ENCODE measurements at regions of chr19 and their contacts with region 1.

Region 1: GRCh38 chr19:11035441-11036377 is 53.6 kb upstream of the LDLR start:
- DNase-seq: peak; percentile 78 to 92
- ATAC-seq: peak; percentile 85 to 92
- H3K4me3 ChIP-seq: no peak overlapping the region
- H3K27ac ChIP-seq: peak overlapping the region; percentile 64 to 73 (median 72)
- H3K4me1 ChIP-seq: peaks cover 11 to 15% of the 10 kb centered on the region in 2 donors
- H3K27me3 ChIP-seq: no peaks in the 10 kb centered on the region
- CTCF ChIP-seq: peak; percentile 63 to 83 (median 82)
- POLR2A ChIP-seq: no peak

Region 2: DNA sequence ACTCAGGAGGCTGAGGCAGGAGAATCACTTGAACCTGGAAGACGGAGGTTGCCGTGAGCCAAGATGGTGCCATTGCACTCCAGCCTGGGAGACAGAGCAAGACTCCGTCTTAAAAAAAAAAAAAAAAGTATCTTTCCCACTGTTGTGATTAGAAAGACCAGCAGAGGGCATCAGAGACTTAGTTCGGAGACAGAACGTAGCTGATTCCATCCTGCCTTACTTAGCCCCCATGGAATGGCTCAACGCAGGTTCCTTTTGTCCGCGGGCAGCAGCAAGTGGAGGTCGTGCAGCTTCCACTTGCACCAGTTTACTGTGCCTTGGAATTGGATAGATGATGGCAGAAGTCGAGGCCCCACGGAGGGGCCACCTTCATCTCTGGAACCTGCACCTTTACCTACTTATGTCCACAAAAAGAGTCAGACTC is 99.0 kb before region 1 on chr19:
- in situ Hi-C with region 1: no loop called
- intact Hi-C with region 1: loop called (anchors 1 kb)
- DNase-seq: no peak
- ATAC-seq: peak; percentile 88 to 92
- H3K4me3 ChIP-seq: no peak overlapping the region
- H3K27ac ChIP-seq: no peak overlapping the region
- H3K4me1 ChIP-seq: peaks cover 0 to 6% of the 10 kb centered on the region in 2 donors
- H3K27me3 ChIP-seq: no peaks in the 10 kb centered on the region
- CTCF ChIP-seq: peak; percentile 42 to 65 (median 60)
- POLR2A ChIP-seq: no peak

Region 3: DNA sequence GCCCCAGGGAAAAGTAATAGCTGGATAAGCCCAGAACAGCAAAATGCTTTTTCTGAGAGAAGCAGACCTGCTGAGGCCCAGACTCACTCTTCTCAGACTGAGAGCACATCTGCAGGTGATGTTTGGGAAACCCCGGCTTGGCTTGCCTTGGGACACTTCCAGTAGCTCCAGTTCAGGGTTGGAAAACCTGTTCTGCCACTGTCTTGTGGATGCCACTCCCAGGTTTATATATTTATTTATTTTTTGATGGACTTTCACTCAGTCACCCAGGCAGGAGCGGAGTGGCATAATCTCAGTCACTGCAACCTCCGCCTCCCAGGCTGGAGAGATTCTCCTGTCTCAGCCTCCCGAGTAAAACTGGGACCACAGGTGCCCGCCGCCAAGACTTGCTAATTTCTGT is 82.9 kb before region 1 on chr19:
- in situ Hi-C with region 1: no loop called
- intact Hi-C with region 1: no loop called
- DNase-seq: no peak
- ATAC-seq: no peak
- H3K4me3 ChIP-seq: no peak overlapping the region
- H3K27ac ChIP-seq: no peak overlapping the region
- H3K4me1 ChIP-seq: no peaks in the 10 kb centered on the region
- H3K27me3 ChIP-seq: no peaks in the 10 kb centered on the region
- CTCF ChIP-seq: no peak
- POLR2A ChIP-seq: no peak

Region 4: GRCh38 chr19:11090054-11090900 is 54.6 kb after region 1 on chr19:
- in situ Hi-C with region 1: no loop called
- intact Hi-C with region 1: loop called (anchors 5 kb)
- DNase-seq: peak; percentile 92 to 93
- ATAC-seq: peak; percentile 74 to 80
- H3K4me3 ChIP-seq: peak overlapping the region; percentile 45 to 64 (median 56)
- H3K27ac ChIP-seq: peak overlapping the region; percentile 81 to 85 (median 82)
- H3K4me1 ChIP-seq: peaks cover 5 to 12% of the 10 kb centered on the region in 2 donors
- H3K27me3 ChIP-seq: peaks cover 23 to 41% (median 37%) of the 10 kb centered on the region in 3 donors
- CTCF ChIP-seq: no peak
- POLR2A ChIP-seq: peak; percentile 75 to 88

Region 5: GRCh38 chr19:11125994-11126685 is 90.4 kb after region 1 on chr19:
- in situ Hi-C with region 1: loop called (anchors 5 to 10 kb)
- intact Hi-C with region 1: loop called (anchors 1 kb)
- DNase-seq: peak; percentile 45 to 63
- ATAC-seq: peak; percentile 50 to 57
- H3K4me3 ChIP-seq: no peak overlapping the region
- H3K27ac ChIP-seq: no peak overlapping the region
- H3K4me1 ChIP-seq: no peaks in the 10 kb centered on the region
- H3K27me3 ChIP-seq: no peaks in the 10 kb centered on the region
- CTCF ChIP-seq: peak; percentile 69 to 75 (median 71)
- POLR2A ChIP-seq: no peak

Region 6: DNA sequence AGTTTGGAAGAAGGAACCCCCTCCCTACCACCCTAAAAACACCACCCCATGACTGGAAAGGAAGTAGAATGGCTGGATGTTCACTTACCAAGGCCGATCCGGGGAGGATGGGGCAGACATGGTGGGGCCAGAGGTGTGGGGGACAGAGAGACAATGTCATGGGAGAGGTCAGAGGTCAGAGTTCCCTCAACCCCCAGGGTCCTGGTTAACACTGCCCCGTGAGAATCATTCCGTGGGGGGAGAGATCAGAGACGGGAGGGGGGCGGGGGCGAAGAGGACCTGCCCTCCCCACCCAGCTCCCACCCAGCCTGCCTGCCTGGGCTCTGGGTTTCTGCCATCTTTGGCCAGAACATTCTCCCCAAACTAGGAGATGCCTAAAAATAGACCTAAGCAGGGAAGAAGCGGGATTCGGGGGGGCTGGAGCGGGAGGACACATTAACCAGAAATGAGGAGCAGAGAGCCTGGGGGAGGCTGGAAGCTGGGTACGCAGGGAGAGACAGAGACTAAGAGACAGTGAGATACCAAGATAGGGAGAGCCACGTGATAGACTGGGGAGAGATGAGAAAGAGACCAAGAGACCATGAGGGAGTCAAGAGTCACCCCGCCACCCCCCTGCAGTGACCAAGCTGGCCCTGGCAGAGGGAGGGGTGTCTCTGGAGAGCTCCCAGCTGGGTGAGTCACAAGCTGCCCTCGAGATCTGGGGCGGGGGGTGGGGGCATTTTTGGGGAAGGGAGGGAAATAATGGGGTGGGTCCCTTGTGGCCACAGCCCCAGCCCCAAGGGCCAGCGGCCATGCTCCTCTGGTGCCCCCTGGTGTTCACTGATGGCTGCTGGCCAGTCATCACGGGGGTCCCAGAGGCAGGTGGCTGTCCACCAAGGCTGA is 167.7 kb after region 1 on chr19:
- in situ Hi-C with region 1: loop called in 3 of 4 experiments (anchors 10 to 25 kb)
- intact Hi-C with region 1: loop called (anchors 10 kb)
- DNase-seq: peak in 1 of 2 donors; percentile 51
- ATAC-seq: peak; percentile 43 to 76
- H3K4me3 ChIP-seq: peak overlapping the region; percentile 8 to 37 (median 30)
- H3K27ac ChIP-seq: peak overlapping the region; percentile 69 to 75 (median 74)
- H3K4me1 ChIP-seq: peaks cover 9 to 14% of the 10 kb centered on the region in 2 donors
- H3K27me3 ChIP-seq: no peaks in the 10 kb centered on the region
- CTCF ChIP-seq: peak; percentile 67 to 95 (median 85)
- POLR2A ChIP-seq: no peak

Measured in gastrocnemius medialis (tissue), 4 donors.